Heart left ventricle (tissue), 16 donors: ENCODE measurements at regions of chr1 and their contacts with region 1.

Region 1: GRCh38 chr1:52683367-52683940 is 14.7 kb downstream of the COA7 start:
- DNase-seq: no peak
- ATAC-seq: no peak
- H3K4me3 ChIP-seq: no peak overlapping the region
- H3K27ac ChIP-seq: no peak overlapping the region
- H3K4me1 ChIP-seq: peaks cover 0 to 6% (median 0%) of the 10 kb centered on the region in 12 donors
- H3K27me3 ChIP-seq: no peaks in the 10 kb centered on the region
- CTCF ChIP-seq: no peak
- POLR2A ChIP-seq: no peak

Region 2: DNA sequence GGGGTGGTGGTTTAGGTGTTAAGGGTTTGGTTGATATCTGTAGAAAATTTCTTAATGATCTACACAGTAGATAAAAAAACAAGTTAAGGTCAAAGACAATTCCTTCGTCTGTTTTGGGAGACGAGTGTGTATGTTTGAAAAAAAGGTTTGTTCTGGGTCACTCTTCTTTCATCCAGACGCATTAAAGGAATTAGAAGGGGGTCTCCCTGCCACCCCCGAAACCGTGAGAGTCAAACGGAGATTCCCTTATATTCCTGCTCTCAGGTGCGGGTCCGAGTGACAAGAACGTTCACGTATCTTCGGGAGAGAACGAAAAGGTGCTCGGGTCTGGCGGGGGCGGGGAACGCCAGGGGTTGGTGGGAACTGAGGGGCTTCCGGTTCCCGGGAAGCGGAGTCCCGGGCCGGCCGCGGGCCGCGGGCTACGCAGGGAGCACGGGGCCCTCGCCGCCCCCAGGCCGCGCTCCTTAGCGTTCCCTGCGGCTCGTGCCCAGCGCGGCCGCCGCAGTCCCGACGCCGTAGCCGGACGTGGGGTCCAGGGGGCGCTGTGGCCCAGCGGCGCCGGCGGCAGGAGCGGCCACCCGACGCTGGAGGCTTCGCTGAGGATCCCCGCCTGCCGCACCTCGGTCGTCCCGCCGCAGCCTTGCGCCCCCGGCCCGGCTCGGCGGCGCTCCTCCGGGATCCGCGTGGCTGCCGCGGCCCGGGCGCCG is 541.8 kb before region 1 on chr1 and contains the start of gene ZFYVE9:
- intact Hi-C with region 1: loop called in 2 of 10 experiments (anchors 10 kb)
- DNase-seq: peak; percentile 75 to 90 (median 81)
- ATAC-seq: peak; percentile 76 to 97 (median 96)
- H3K4me3 ChIP-seq: peak within 1 kb of the TSS; percentile 48 to 99 (median 89)
- H3K27ac ChIP-seq: peak within 1 kb of the TSS; percentile 87 to 98 (median 94)
- H3K4me1 ChIP-seq: peaks cover 0 to 39% (median 14%) of the 10 kb centered on the region in 12 donors
- H3K27me3 ChIP-seq: peaks cover 0 to 11% (median 0%) of the 10 kb centered on the region in 9 donors
- CTCF ChIP-seq: peak; percentile 34 to 93 (median 70)
- POLR2A ChIP-seq: peak in 1 of 2 donors; percentile 27
- total RNA-seq, gene ZFYVE9: 12.6 to 19.2 (median 17.3) TPM

Region 3: DNA sequence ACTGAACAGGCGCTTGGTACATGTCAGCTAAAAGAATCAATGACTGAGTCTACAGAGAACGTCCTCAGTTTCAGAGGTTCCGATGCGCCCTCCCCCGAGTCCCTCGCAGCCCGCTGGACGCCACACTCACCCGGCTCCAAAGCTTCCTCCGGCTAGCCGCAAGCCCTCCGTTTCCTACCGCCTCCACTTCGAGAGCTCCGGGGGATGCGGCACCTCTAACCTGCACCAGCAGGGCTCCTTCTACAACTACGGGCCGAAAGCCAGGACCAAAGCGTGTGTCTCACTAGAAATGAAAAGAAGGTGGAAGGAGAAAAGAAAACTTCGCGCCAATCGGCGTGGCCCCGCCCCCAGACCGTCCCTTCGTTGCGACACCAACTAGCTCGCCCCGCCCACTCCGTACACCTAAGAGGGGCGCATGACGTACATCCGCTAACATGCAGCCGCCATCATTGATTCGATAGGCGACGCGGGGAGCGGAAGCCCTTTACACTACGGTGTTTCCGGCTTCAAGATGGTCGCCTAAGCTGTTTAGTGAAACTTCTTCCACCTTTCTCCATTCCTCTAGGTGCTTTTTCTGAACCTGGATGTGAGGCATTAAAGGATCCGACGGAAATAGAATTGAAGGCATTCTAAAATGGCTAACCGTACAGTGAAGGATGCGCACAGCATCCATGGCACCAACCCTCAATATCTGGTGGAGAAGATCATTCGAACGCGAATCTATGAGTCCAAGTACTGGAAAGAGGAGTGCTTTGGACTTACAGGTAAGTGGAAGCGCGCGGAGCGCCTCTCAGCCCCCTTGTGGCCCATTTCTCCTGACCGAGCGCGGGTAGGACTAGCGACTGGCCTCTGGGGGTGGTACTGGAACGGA is 279.1 kb before region 1 on chr1 and contains the starts of genes ORC1 and PRPF38A:
- intact Hi-C with region 1: loop called in 1 of 10 experiments (anchors 10 kb)
- DNase-seq: peak; percentile 96 to 98 (median 97)
- ATAC-seq: peak; percentile 100
- H3K4me3 ChIP-seq: peak within 1 kb of the TSS; percentile 64 to 96 (median 88)
- H3K27ac ChIP-seq: peak within 1 kb of the TSS; percentile 65 to 94 (median 85)
- H3K4me1 ChIP-seq: peaks cover 0 to 31% (median 18%) of the 10 kb centered on the region in 12 donors
- H3K27me3 ChIP-seq: no peaks in the 10 kb centered on the region
- CTCF ChIP-seq: peak in 11 of 12 donors; percentile 12 to 54 (median 42)
- POLR2A ChIP-seq: peak in 1 of 2 donors; percentile 48
- total RNA-seq, gene ORC1: 0.09 to 1.4 (median 0.16) TPM in 6 of 9 donors, not detected in the others
- total RNA-seq, gene PRPF38A: 6.6 to 24.7 (median 16.6) TPM

Region 4: DNA sequence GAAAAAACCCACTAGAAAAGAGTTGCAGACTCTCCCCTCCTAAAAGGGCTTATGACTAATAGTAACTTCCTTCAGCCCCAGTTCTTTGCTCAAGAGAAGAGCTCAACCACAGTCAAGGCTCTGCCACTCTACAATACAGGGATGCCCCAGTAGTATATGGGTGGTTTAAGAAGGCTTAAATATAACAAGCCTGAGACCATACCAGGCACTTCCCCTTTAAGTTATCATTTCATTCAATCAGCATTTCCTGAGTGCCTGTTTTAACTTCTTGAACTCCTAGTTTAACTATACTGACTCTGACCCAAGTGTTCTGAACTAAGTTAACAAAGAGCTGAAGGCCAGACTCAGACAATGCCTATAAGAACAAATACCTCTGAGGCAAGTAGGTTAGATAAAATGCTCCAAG is 259.2 kb before region 1 on chr1:
- intact Hi-C with region 1: loop called in 2 of 10 experiments (anchors 10 kb)
- DNase-seq: no peak
- ATAC-seq: peak in 3 of 4 donors; percentile 39 to 49 (median 45)
- H3K4me3 ChIP-seq: no peak overlapping the region
- H3K27ac ChIP-seq: peak overlapping the region in 4 of 12 donors; percentile 0 to 42 (median 28)
- H3K4me1 ChIP-seq: peaks cover 0 to 20% (median 7%) of the 10 kb centered on the region in 12 donors
- H3K27me3 ChIP-seq: no peaks in the 10 kb centered on the region
- CTCF ChIP-seq: no peak
- POLR2A ChIP-seq: no peak

Region 5: GRCh38 chr1:52552505-52553361 is 130.7 kb before region 1 on chr1 and contains the start of gene TUT4:
- intact Hi-C with region 1: loop called in 4 of 10 experiments (anchors 10 kb)
- DNase-seq: peak; percentile 82 to 90 (median 85)
- ATAC-seq: peak; percentile 89 to 92 (median 91)
- H3K4me3 ChIP-seq: peak within 1 kb of the TSS; percentile 77 to 100 (median 98)
- H3K27ac ChIP-seq: peak within 1 kb of the TSS; percentile 48 to 96 (median 92)
- H3K4me1 ChIP-seq: peaks cover 0 to 30% (median 13%) of the 10 kb centered on the region in 12 donors
- H3K27me3 ChIP-seq: no peaks in the 10 kb centered on the region
- CTCF ChIP-seq: peak in 1 of 12 donors; percentile 32
- POLR2A ChIP-seq: peak in 1 of 2 donors; percentile 35
- total RNA-seq, gene TUT4: 23.7 to 43.8 (median 31.5) TPM

Region 6: GRCh38 chr1:52662645-52663313 is 20.7 kb before region 1 on chr1:
- intact Hi-C with region 1: no loop called
- DNase-seq: no peak
- ATAC-seq: no peak
- H3K4me3 ChIP-seq: no peak overlapping the region
- H3K27ac ChIP-seq: no peak overlapping the region
- H3K4me1 ChIP-seq: no peaks in the 10 kb centered on the region
- H3K27me3 ChIP-seq: no peaks in the 10 kb centered on the region
- CTCF ChIP-seq: no peak
- POLR2A ChIP-seq: no peak

Region 7: GRCh38 chr1:53450225-53450624 is 766.8 kb after region 1 on chr1:
- intact Hi-C with region 1: no loop called
- DNase-seq: no peak
- ATAC-seq: no peak
- H3K4me3 ChIP-seq: no peak overlapping the region
- H3K27ac ChIP-seq: no peak overlapping the region
- H3K4me1 ChIP-seq: no peaks in the 10 kb centered on the region
- H3K27me3 ChIP-seq: peaks cover 0 to 45% (median 9%) of the 10 kb centered on the region in 9 donors
- CTCF ChIP-seq: peak in 5 of 12 donors; percentile 4 to 25 (median 20)
- POLR2A ChIP-seq: no peak